ENCODE measurements at regions of chr4 and their contacts with region 1.

Region 1: GRCh38 chr4:70734168-70734954 is 12.6 kb downstream of the RUFY3 start:
- DNase-seq: peak in 29 of 35 experiments; percentile 5 to 76 (median 20)
- ATAC-seq: peak; percentile 89 to 94 (median 92)
- H3K4me3 ChIP-seq: peak overlapping the region; percentile 28 to 58
- H3K4me3 Mint-ChIP-seq: peak overlapping the region; percentile 66 to 71 (median 70)
- H3K27ac ChIP-seq: peak overlapping the region; percentile 82
- H3K27ac Mint-ChIP-seq: peak overlapping the region; percentile 93 to 94
- H3K4me1 ChIP-seq: peaks cover 36 to 44% of the 10 kb centered on the region in 2 experiments
- H3K4me1 Mint-ChIP-seq: peaks cover 41 to 61% (median 47%) of the 10 kb centered on the region in 3 donors
- H3K27me3 ChIP-seq: no peaks in the 10 kb centered on the region
- H3K27me3 Mint-ChIP-seq: no peaks in the 10 kb centered on the region

Region 2: DNA sequence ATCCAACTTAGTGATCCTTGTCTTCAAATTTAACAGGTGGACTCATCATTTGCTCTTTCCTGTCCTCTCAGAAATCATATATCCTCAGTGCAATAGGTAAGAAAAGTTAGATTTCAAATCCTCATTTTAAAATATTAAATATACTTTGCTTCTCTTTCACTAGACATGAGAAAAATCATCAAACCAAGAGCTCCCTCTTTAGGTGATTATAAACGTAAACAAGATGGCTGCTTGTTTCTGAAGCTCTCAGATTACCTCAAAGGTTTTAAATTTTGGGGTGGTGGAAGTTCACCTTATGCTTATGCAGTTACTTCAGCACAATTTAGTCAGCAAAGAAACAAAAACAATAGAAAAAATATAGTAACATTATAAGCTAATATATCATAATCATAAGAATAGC is 464.7 kb before region 1 on chr4:
- CTCF ChIA-PET with region 1: no interaction called
- POLR2A ChIA-PET with region 1: no interaction called
- DNase-seq: no peak
- ATAC-seq: no peak
- H3K4me3 ChIP-seq: no peak overlapping the region
- H3K4me3 Mint-ChIP-seq: no peak overlapping the region
- H3K27ac ChIP-seq: no peak overlapping the region
- H3K27ac Mint-ChIP-seq: no peak overlapping the region
- H3K4me1 ChIP-seq: no peaks in the 10 kb centered on the region
- H3K4me1 Mint-ChIP-seq: no peaks in the 10 kb centered on the region
- H3K27me3 ChIP-seq: no peaks in the 10 kb centered on the region
- H3K27me3 Mint-ChIP-seq: no peaks in the 10 kb centered on the region

Region 3: GRCh38 chr4:70559211-70559830 is 175.0 kb before region 1 on chr4:
- CTCF ChIA-PET with region 1: no interaction called
- POLR2A ChIA-PET with region 1: no interaction called
- DNase-seq: peak in 23 of 35 experiments; percentile 2 to 55 (median 12)
- ATAC-seq: peak in 1 of 4 experiments; percentile 43
- H3K4me3 ChIP-seq: no peak overlapping the region
- H3K4me3 Mint-ChIP-seq: no peak overlapping the region
- H3K27ac ChIP-seq: no peak overlapping the region
- H3K27ac Mint-ChIP-seq: no peak overlapping the region
- H3K4me1 ChIP-seq: no peaks in the 10 kb centered on the region
- H3K4me1 Mint-ChIP-seq: peaks cover 7 to 13% (median 10%) of the 10 kb centered on the region in 3 donors
- H3K27me3 ChIP-seq: no peaks in the 10 kb centered on the region
- H3K27me3 Mint-ChIP-seq: no peaks in the 10 kb centered on the region

Region 4: GRCh38 chr4:70687821-70688794 is 46.3 kb before region 1 on chr4 and contains the start of gene UTP3:
- CTCF ChIA-PET with region 1: interaction called, 12 to 25 read pairs
- POLR2A ChIA-PET with region 1: interaction called in 1 of 2 experiments, 14 read pairs
- DNase-seq: peak; percentile 84 to 98 (median 89)
- ATAC-seq: peak; percentile 88 to 94 (median 88)
- H3K4me3 ChIP-seq: peak within 1 kb of the TSS; percentile 88 to 92
- H3K4me3 Mint-ChIP-seq: peak within 1 kb of the TSS; percentile 98 to 99 (median 99)
- H3K27ac ChIP-seq: peak within 1 kb of the TSS; percentile 92
- H3K27ac Mint-ChIP-seq: peak within 1 kb of the TSS; percentile 99
- H3K4me1 ChIP-seq: peaks cover 22 to 26% of the 10 kb centered on the region in 2 experiments
- H3K4me1 Mint-ChIP-seq: peaks cover 39 to 42% (median 40%) of the 10 kb centered on the region in 3 donors
- H3K27me3 ChIP-seq: no peaks in the 10 kb centered on the region
- H3K27me3 Mint-ChIP-seq: no peaks in the 10 kb centered on the region
- total RNA-seq, gene UTP3: 15.1 to 34.9 (median 34.0) TPM

Region 5: DNA sequence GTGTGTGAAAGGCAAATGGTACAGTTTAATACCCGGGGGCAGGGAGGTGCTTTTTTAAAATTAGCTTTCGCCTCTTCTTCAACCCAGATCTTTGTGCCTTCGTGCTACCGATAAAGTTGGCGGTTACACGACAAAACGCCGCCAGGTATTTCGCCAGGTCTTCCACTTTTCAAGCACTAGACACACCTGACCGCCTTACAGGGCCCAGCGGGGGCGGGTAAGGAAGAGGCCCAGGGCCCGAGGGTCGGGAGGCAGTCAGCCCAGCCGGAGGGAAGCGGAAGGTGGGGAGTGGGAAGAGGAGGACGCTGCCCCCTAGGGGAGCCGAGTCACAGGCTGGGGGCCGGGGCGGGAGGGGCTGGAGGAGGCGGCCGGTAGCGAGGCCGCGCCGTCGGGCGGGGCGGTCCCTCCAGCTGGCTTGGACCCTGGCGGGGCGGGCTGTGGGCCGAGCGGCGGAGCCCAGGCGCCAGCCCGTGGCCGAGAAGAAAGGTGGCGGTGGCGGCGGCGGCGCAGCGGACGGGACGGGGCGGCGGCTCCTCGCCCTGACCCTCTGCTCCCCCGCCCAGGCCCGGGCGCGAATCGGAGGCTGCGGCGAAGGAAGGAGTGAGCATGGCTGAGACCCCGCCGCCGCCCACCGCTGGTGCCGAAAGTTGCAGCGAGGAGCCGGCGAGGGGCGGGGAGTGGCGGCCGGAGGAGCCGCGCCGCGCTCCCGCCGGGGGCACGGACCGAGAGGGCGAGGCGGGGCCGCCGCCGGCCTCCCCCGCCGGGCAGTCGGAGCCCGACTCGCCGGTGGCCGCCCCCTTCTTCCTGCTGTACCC is 29.8 kb before region 1 on chr4:
- CTCF ChIA-PET with region 1: interaction called, 9 to 49 read pairs
- POLR2A ChIA-PET with region 1: interaction called, 6 to 14 read pairs
- DNase-seq: peak in 30 of 35 experiments; percentile 8 to 76 (median 38)
- ATAC-seq: peak; percentile 42 to 58 (median 47)
- H3K4me3 ChIP-seq: peak overlapping the region; percentile 55 to 62
- H3K4me3 Mint-ChIP-seq: peak overlapping the region; percentile 88 to 97 (median 93)
- H3K27ac ChIP-seq: peak overlapping the region; percentile 80
- H3K27ac Mint-ChIP-seq: peak overlapping the region; percentile 89 to 94
- H3K4me1 ChIP-seq: peaks cover 17 to 19% of the 10 kb centered on the region in 2 experiments
- H3K4me1 Mint-ChIP-seq: peaks cover 26 to 35% (median 27%) of the 10 kb centered on the region in 3 donors
- H3K27me3 ChIP-seq: no peaks in the 10 kb centered on the region
- H3K27me3 Mint-ChIP-seq: no peaks in the 10 kb centered on the region

Region 6: DNA sequence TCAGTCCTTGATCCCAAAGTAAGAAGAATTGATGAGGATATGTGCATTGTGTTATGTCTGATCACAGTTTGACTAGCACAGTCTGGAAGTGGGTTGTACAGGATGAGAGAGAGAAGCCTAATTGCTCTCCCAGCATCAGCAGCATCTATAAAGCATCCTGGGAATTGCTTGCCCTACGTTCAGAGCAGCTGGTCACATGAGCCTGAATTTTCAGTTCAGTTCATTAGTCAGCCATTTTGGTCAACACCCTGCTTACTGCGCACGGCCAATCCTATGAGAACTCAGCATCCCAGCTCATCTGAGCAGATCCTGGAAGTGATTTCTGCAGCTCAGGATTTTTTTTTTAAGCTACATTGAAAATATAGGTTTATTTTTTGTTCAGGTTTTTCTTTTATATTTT is 12.6 kb before region 1 on chr4 and contains the start of gene RUFY3:
- CTCF ChIA-PET with region 1: interaction called, 8 to 11 read pairs
- POLR2A ChIA-PET with region 1: interaction called, 4 to 8 read pairs
- DNase-seq: no peak
- ATAC-seq: no peak
- H3K4me3 ChIP-seq: no peak within 1 kb of the TSS
- H3K4me3 Mint-ChIP-seq: peak within 1 kb of the TSS in 2 of 3 donors; percentile 34 to 50
- H3K27ac ChIP-seq: no peak within 1 kb of the TSS
- H3K27ac Mint-ChIP-seq: peak within 1 kb of the TSS; percentile 39 to 79
- H3K4me1 ChIP-seq: peaks cover 5 to 11% of the 10 kb centered on the region in 2 experiments
- H3K4me1 Mint-ChIP-seq: peaks cover 21 to 28% (median 24%) of the 10 kb centered on the region in 3 donors
- H3K27me3 ChIP-seq: no peaks in the 10 kb centered on the region
- H3K27me3 Mint-ChIP-seq: no peaks in the 10 kb centered on the region
- total RNA-seq, gene RUFY3: 29.8 to 34.1 (median 33.3) TPM

Region 7: DNA sequence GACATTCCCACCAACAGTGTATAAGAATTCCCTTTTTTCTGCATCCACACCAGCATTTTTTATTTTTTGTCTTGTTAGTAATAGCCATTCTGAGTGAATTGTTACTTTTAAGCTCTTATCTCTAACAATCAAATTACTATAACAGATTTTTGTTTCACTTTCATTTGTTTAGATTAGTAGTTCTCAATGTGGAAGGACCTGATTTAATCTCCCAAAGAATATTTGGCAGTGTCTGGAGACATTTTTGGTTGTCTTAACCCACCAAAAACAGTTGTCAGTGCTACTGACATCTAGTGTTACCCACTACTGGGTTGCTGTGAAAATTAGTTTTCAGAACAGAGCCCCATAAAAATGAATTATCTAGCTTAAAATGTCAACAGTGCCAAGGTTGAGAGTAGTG is 25.3 kb after region 1 on chr4:
- CTCF ChIA-PET with region 1: interaction called, 3 to 18 read pairs
- POLR2A ChIA-PET with region 1: interaction called in 1 of 2 experiments, 5 read pairs
- DNase-seq: peak in 1 of 35 experiments; percentile 8
- ATAC-seq: no peak
- H3K4me3 ChIP-seq: no peak overlapping the region
- H3K4me3 Mint-ChIP-seq: peak overlapping the region; percentile 17 to 58 (median 41)
- H3K27ac ChIP-seq: no peak overlapping the region
- H3K27ac Mint-ChIP-seq: no peak overlapping the region
- H3K4me1 ChIP-seq: peaks cover 0 to 2% of the 10 kb centered on the region in 2 experiments
- H3K4me1 Mint-ChIP-seq: peaks cover 14 to 38% (median 15%) of the 10 kb centered on the region in 3 donors
- H3K27me3 ChIP-seq: no peaks in the 10 kb centered on the region
- H3K27me3 Mint-ChIP-seq: no peaks in the 10 kb centered on the region

Region 8: DNA sequence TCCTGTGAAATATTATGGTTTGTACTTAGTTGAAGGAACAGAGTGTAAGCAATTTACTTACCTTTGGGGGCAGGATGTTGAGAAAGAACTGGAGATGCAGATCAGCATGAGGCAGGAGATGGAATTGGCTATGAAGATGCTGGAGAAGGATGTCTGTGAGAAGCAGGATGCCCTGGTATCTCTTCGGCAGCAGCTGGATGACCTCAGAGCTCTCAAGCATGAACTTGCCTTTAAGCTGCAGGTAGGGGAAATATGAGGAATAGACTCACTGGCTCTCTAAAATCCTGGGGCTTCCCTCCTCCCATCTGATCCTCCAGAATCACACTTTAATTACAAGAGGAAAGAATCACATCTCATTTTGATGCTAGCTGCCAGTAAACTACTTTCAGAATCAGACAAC is 54.4 kb after region 1 on chr4:
- CTCF ChIA-PET with region 1: no interaction called
- POLR2A ChIA-PET with region 1: no interaction called
- DNase-seq: no peak
- ATAC-seq: no peak
- H3K4me3 ChIP-seq: no peak overlapping the region
- H3K4me3 Mint-ChIP-seq: no peak overlapping the region
- H3K27ac ChIP-seq: no peak overlapping the region
- H3K27ac Mint-ChIP-seq: no peak overlapping the region
- H3K4me1 ChIP-seq: no peaks in the 10 kb centered on the region
- H3K4me1 Mint-ChIP-seq: no peaks in the 10 kb centered on the region
- H3K27me3 ChIP-seq: no peaks in the 10 kb centered on the region
- H3K27me3 Mint-ChIP-seq: no peaks in the 10 kb centered on the region

Region 9: DNA sequence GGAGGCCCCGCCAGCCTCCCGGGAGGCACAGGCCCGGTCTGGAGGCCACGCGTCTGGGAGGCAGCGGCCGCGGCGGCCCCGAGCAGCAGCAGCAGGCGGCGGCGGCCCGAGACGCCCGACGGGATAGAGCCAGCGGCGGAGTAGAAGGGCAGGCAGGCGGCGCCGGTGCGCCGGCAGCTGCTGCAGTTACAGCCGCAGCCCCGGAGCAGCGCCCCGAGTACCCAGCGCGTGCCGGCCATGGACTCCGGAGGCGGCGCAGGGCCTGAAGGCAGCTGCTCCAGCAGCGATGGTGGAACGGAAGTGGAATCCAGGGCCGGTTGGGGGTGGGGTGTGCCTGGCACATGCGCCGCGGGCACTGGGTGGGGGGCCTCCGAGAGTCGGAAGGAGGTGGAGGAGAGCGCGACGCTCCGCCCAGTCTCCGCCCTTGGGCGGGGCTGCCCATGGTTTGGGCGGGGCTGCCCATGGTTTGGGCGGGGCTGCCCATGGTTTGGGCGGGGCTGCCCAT is 105.3 kb after region 1 on chr4 and contains the start of gene GRSF1:
- CTCF ChIA-PET with region 1: interaction called in 1 of 2 experiments, 10 read pairs
- POLR2A ChIA-PET with region 1: interaction called in 1 of 2 experiments, 9 read pairs
- DNase-seq: peak; percentile 84 to 97 (median 94)
- ATAC-seq: peak; percentile 89 to 93 (median 90)
- H3K4me3 ChIP-seq: peak within 1 kb of the TSS; percentile 70 to 76
- H3K4me3 Mint-ChIP-seq: peak within 1 kb of the TSS; percentile 93 to 97 (median 97)
- H3K27ac ChIP-seq: peak within 1 kb of the TSS; percentile 74
- H3K27ac Mint-ChIP-seq: peak within 1 kb of the TSS; percentile 96 to 97
- H3K4me1 ChIP-seq: peaks cover 13 to 35% of the 10 kb centered on the region in 2 experiments
- H3K4me1 Mint-ChIP-seq: peaks cover 20 to 46% (median 24%) of the 10 kb centered on the region in 3 donors
- H3K27me3 ChIP-seq: no peaks in the 10 kb centered on the region
- H3K27me3 Mint-ChIP-seq: no peaks in the 10 kb centered on the region
- total RNA-seq, gene GRSF1: 42.6 to 48.8 (median 44.7) TPM

Region 10: GRCh38 chr4:70901984-70902576 is 167.7 kb after region 1 on chr4 and contains the start of gene MOB1B:
- CTCF ChIA-PET with region 1: interaction called in 1 of 2 experiments, 11 read pairs
- POLR2A ChIA-PET with region 1: no interaction called
- DNase-seq: peak; percentile 65 to 90 (median 82)
- ATAC-seq: peak; percentile 95 to 97 (median 96)
- H3K4me3 ChIP-seq: peak within 1 kb of the TSS; percentile 63 to 94
- H3K4me3 Mint-ChIP-seq: peak within 1 kb of the TSS; percentile 94 to 99 (median 98)
- H3K27ac ChIP-seq: peak within 1 kb of the TSS; percentile 39
- H3K27ac Mint-ChIP-seq: peak within 1 kb of the TSS; percentile 84 to 85
- H3K4me1 ChIP-seq: peaks cover 2 to 18% of the 10 kb centered on the region in 2 experiments
- H3K4me1 Mint-ChIP-seq: peaks cover 37 to 39% (median 38%) of the 10 kb centered on the region in 3 donors
- H3K27me3 ChIP-seq: peaks cover 0 to 4% of the 10 kb centered on the region in 2 experiments
- H3K27me3 Mint-ChIP-seq: no peaks in the 10 kb centered on the region
- total RNA-seq, gene MOB1B: 10.7 to 16.0 (median 11.2) TPM

Region 11: DNA sequence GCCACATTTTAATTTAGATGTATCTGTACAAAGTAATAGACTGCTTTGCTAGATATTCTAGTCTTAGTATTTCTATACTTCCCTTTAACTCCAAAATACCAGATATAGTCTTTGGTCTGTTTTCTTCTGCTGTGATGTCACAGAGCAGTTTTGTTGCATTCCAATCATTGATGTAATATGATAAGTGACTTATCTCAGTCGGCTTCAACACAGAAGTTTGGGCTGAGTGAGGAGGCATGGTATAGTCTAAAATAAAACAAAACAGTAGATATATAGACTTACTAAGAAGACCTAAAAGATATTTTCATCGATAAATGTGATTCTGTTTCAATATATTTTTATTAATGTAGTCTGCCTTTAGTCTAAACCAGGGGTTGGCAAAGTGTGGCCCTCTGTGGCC is 429.0 kb after region 1 on chr4:
- CTCF ChIA-PET with region 1: no interaction called
- POLR2A ChIA-PET with region 1: no interaction called
- DNase-seq: no peak
- ATAC-seq: no peak
- H3K4me3 ChIP-seq: no peak overlapping the region
- H3K4me3 Mint-ChIP-seq: no peak overlapping the region
- H3K27ac ChIP-seq: no peak overlapping the region
- H3K27ac Mint-ChIP-seq: no peak overlapping the region
- H3K4me1 ChIP-seq: no peaks in the 10 kb centered on the region
- H3K4me1 Mint-ChIP-seq: no peaks in the 10 kb centered on the region
- H3K27me3 ChIP-seq: no peaks in the 10 kb centered on the region
- H3K27me3 Mint-ChIP-seq: peaks cover 9 to 15% of the 10 kb centered on the region in 2 donors